Cardiac septum (tissue), 1 donor: ENCODE measurements at regions of chr7 and their contacts with region 1.

Region 1: DNA sequence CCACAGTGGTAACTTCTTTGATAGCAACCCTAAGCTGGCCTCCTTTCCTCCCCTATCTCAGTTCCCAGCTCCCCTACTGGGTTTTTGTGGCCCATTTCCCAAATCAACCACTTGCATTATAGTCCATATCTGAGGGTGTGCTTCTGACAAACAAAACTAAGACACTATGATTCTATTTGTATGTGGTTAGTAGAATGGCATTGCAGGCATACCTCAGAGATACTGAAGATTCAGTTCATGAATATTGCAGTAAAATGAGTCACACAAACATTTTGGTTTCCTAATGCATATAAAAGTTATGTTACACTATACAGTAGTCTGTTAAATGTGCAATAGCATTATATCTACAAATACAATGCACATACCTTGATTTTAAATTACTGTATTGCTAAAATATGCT is 15.4 kb upstream of the TMEM243 start:
- DNase-seq: no peak

Region 2: DNA sequence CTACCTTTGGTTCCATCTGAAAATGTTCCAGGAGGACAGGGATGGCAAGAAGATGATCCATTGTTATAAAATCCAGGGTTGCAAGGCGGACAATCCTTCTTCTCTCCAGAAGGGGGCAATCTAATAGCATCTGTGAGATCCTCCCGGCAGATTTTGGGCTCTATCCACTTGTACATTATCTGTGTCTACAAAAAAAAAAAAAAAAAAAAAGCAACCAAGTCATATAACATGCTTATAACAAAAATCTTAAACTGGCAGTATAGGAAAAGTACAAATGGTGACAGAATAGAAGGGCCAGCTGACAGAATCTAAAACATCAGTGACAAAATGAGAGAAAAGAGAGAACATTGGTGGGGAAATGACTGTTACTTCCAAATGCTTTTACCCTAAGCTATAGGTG is 308.2 kb before region 1 on chr7:
- intact Hi-C with region 1: loop called (anchors 5 kb)
- DNase-seq: no peak

Region 3: GRCh38 chr7:87287738-87288341 is 52.9 kb after region 1 on chr7:
- intact Hi-C with region 1: no loop called
- DNase-seq: no peak